ENCODE measurements at regions of chr16 and their contacts with region 1.

Region 1: GRCh38 chr16:52191531-52192134 is 355.3 kb downstream of the TOX3 start:
- DNase-seq: peak in 1 of 2 donors; percentile 45
- H3K4me3 ChIP-seq: no peak overlapping the region
- CTCF ChIP-seq: peak in 1 of 3 donors; percentile 70
- POLR2A ChIP-seq: no peak

Region 2: DNA sequence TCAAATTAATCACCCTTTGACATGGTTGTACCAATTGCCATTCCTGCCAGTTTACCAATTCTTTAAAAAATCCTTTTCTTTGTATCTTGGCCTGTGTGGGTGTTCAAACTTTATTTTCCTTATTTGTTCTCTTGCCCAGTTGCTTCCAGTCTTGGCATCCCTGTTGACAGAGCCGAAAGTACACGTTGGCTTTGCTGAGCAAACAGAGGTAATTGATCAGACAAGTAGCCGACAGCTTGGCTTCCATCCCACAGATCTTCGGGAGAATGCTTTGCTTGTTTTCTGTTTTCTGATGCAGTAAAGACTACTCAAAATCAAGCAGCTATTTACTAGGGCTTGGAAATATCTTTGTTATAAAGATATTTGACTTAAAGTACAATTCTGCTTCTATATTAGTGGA is 533.8 kb before region 1 on chr16:
- intact Hi-C with region 1: no loop called
- DNase-seq: no peak
- H3K4me3 ChIP-seq: no peak overlapping the region
- CTCF ChIP-seq: no peak
- POLR2A ChIP-seq: no peak

Region 3: DNA sequence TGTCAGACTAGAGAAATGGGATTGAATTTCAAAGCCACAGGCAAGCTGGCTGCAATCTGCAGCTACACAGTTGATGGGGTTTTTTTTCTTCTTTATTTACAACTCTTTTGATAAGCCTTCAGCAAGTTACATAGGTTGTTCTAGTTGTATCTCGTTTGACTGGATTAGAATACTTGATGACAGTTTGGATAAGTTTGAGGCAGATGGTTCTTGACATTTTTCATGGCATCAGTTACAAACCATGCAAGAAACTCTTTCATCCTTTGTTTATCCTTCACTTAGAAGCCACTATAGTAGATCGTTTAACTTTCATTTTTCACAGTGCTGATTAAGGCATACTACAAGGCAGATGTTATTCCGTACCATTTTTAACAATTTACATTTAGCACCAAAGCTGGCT is 116.4 kb after region 1 on chr16:
- intact Hi-C with region 1: no loop called
- DNase-seq: no peak
- H3K4me3 ChIP-seq: no peak overlapping the region
- CTCF ChIP-seq: no peak
- POLR2A ChIP-seq: no peak

Region 4: DNA sequence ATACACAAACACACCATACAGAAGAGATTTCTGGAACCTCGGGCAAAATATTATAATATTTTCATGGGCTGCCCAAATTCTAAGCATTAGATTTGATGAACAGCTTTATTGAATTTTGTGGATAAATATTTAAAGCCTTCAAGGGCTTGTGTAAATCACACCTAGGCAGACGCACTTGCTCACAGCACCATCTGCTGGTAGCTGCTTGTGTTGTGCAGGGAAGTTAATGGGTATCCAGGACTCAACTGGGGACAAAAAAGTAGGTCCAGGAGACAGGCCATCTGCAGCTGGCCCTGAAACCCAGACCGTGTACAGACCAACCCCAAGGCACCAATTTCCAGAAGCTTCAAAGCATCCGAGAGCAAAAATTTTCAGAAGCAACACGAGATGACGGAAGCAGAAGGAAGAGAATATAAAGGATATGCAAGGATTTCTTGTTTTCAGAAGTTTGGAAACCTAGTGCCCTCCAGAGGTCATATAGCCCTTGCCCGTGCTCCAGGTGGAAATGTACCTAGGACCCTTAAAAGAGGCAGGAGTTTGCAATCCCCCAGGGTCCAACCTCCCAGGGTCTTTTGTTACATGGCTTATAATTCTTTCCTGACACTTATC is 721.0 kb after region 1 on chr16:
- intact Hi-C with region 1: loop called (anchors 5 kb)
- DNase-seq: peak in 1 of 2 donors; percentile 32
- H3K4me3 ChIP-seq: no peak overlapping the region
- CTCF ChIP-seq: no peak
- POLR2A ChIP-seq: no peak

Region 5: GRCh38 chr16:53022374-53022773 is 830.7 kb after region 1 on chr16:
- intact Hi-C with region 1: loop called (anchors 5 kb)
- DNase-seq: no peak
- H3K4me3 ChIP-seq: no peak overlapping the region
- CTCF ChIP-seq: no peak
- POLR2A ChIP-seq: no peak